ENCODE measurements at regions of chr17 and their contacts with region 1.

Region 1: GRCh38 chr17:32006957-32007462 is at the start of gene LRRC37B:
- DNase-seq: peak; percentile 85 to 88
- ATAC-seq: peak; percentile 88 to 97
- H3K4me3 ChIP-seq: peak within 1 kb of the TSS; percentile 92
- H3K27ac ChIP-seq: peak within 1 kb of the TSS; percentile 84 to 96
- H3K4me1 ChIP-seq: peaks cover 8% of the 10 kb centered on the region; the same call in 1 of the 3 replicates
- CTCF ChIP-seq: peak; percentile 96
- EP300 ChIP-seq: no peak
- POLR2A ChIP-seq: peak; percentile 43
- RAD21 ChIP-seq: peak; percentile 45 to 54; a peak in 3 of 5 replicates
- polyA plus RNA-seq, gene LRRC37B: 14.2 and 17.9 TPM in 2 replicates

Region 2: GRCh38 chr17:31997005-31997404 is 10.0 kb before region 1 on chr17:
- CTCF ChIA-PET with region 1: interaction called, 12 read pairs
- POLR2A ChIA-PET with region 1: no interaction called
- DNase-seq: no peak
- ATAC-seq: no peak; a peak in 1 of 6 replicates
- H3K4me3 ChIP-seq: no peak overlapping the region
- H3K27ac ChIP-seq: no peak overlapping the region
- H3K4me1 ChIP-seq: no peaks in the 10 kb centered on the region
- CTCF ChIP-seq: no peak
- EP300 ChIP-seq: no peak
- POLR2A ChIP-seq: no peak
- RAD21 ChIP-seq: no peak

Region 3: DNA sequence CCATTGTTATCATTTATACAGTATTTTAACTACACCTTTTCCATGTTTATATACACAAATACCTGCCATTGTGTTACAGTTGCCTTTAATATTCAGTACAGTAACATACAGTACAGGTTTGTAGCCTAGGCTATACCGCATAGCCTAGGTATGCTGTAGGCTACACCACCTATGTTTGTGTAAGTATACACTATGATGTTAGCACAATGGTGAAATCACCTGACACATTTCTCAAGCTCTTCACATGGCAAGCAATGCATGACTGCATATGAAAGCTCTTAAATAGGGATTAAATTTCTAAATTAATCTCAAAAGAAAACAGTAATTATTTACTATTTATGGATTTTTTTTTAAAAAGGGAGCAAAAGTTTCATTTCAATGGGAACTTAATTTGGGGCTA is 12.2 kb after region 1 on chr17:
- CTCF ChIA-PET with region 1: interaction called, 19 read pairs
- POLR2A ChIA-PET with region 1: interaction called, 3 read pairs
- DNase-seq: no peak
- ATAC-seq: no peak
- H3K4me3 ChIP-seq: no peak overlapping the region
- H3K27ac ChIP-seq: no peak overlapping the region
- H3K4me1 ChIP-seq: peaks cover 9% of the 10 kb centered on the region; the same call in 2 of the 3 replicates
- CTCF ChIP-seq: no peak
- EP300 ChIP-seq: no peak
- POLR2A ChIP-seq: no peak
- RAD21 ChIP-seq: no peak

Region 4: GRCh38 chr17:32127158-32127897 is 120.3 kb after region 1 on chr17:
- CTCF ChIA-PET with region 1: interaction called, 12 read pairs
- POLR2A ChIA-PET with region 1: interaction called, 3 read pairs
- DNase-seq: peak; percentile 75 to 87
- ATAC-seq: peak; percentile 94 to 96
- H3K4me3 ChIP-seq: peak overlapping the region; percentile 52
- H3K27ac ChIP-seq: peak overlapping the region; percentile 80 to 87
- H3K4me1 ChIP-seq: peaks cover 37% of the 10 kb centered on the region
- CTCF ChIP-seq: no peak
- EP300 ChIP-seq: no peak
- POLR2A ChIP-seq: peak; percentile 87
- RAD21 ChIP-seq: no peak

Region 5: GRCh38 chr17:32142038-32142856 is 135.2 kb after region 1 on chr17 and contains the start of gene RHOT1:
- CTCF ChIA-PET with region 1: interaction called, 48 read pairs
- POLR2A ChIA-PET with region 1: interaction called, 5 read pairs
- DNase-seq: peak; percentile 87
- ATAC-seq: peak; percentile 83 to 84
- H3K4me3 ChIP-seq: peak within 1 kb of the TSS; percentile 86
- H3K27ac ChIP-seq: peak within 1 kb of the TSS; percentile 81 to 96
- H3K4me1 ChIP-seq: peaks cover 16% of the 10 kb centered on the region
- CTCF ChIP-seq: peak; percentile 76
- EP300 ChIP-seq: 0 out of 5 replicates have a peak, but pooled peaks of 1 of the 2 experiments have one; percentile 20
- POLR2A ChIP-seq: peak; percentile 51
- RAD21 ChIP-seq: no peak
- polyA plus RNA-seq, gene RHOT1: 83.2 and 109 TPM in 2 replicates

Measured in A549 (cell line).